CD4-positive, alpha-beta memory T cell (primary cell): ENCODE measurements at regions of chr11 and their contacts with region 1.

Region 1: DNA sequence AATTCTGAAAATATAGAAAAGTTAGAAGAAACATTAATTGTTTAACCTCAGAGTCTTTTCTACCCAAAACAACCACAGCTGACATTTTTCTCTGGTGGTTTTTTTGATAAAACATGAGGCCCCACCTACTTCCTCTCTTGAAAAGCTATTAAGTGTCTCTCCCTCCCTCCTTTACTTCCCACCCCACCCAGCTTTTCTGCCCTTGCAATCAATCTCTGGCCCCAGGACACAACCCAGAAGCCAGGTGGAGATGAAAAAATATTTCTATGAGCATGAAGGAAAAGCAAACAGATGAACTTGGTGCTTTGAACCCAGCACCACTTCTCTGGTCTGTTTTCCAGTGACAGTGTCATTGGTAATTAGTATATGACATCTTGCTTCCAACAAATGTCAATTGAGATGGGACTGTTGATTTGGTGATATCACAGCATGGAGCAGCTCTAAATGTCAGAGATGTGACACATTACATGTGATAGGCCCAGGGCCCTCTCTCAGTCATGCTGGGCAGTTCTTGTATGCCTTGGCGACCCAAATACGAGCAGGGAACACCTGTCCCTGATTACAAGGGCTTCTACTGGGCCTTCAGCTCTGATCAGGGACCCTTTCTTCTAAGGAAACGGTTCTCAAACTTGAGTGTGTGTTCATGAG is 23.9 kb upstream of the TMPRSS13 start:
- DNase-seq: peak; percentile 65 to 74 (median 68)
- H3K4me3 ChIP-seq: peak overlapping the region in 1 of 2 donors; percentile 50
- H3K4me3 Mint-ChIP-seq: peak overlapping the region; percentile 29 to 89 (median 81)
- H3K27ac ChIP-seq: peak overlapping the region; percentile 48
- H3K27ac Mint-ChIP-seq: peak overlapping the region; percentile 88 to 97 (median 94)
- H3K4me1 ChIP-seq: peaks cover 81% of the 10 kb centered on the region
- H3K4me1 Mint-ChIP-seq: peaks cover 61 to 93% (median 75%) of the 10 kb centered on the region in 4 donors
- H3K27me3 ChIP-seq: no peaks in the 10 kb centered on the region
- H3K27me3 Mint-ChIP-seq: no peaks in the 10 kb centered on the region

Region 2: GRCh38 chr11:117189191-117189930 is 763.8 kb before region 1 on chr11:
- CTCF ChIA-PET with region 1: no interaction called
- POLR2A ChIA-PET with region 1: no interaction called
- intact Hi-C with region 1: no loop called
- DNase-seq: no peak
- H3K4me3 ChIP-seq: no peak overlapping the region
- H3K4me3 Mint-ChIP-seq: no peak overlapping the region
- H3K27ac ChIP-seq: no peak overlapping the region
- H3K27ac Mint-ChIP-seq: no peak overlapping the region
- H3K4me1 ChIP-seq: no peaks in the 10 kb centered on the region
- H3K4me1 Mint-ChIP-seq: peaks cover 0 to 15% (median 5%) of the 10 kb centered on the region in 4 donors
- H3K27me3 ChIP-seq: no peaks in the 10 kb centered on the region
- H3K27me3 Mint-ChIP-seq: no peaks in the 10 kb centered on the region

Region 3: DNA sequence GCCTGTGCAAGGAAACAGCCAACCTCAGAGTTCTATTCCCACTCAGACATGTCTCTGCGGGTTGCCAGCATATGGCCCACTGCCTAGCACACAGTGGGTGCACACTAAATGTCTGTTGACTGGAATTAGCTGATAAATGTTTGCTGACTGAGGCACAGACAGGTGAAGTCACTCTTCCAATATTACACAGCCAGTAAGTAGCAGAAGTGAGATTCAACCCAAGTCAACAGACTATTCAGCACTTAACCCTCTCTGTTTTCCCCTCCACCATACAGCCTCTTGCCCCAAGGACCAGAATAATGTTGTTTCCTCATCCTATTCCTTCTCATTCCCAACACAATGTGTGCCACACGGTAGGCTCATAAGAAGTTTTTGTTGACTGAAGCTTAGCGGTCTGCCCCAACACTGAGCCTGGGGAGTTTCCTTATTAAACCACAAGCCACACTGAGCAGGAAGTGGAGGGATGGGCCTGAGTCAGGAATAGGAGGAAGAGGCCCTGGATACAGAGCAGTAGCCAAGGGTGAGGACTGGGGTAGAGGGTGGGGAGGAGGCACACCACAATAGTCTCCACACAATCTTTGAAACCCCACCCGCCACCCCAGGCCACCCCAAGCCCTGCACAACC is 17.4 kb after region 1 on chr11:
- CTCF ChIA-PET with region 1: interaction called, 402 read pairs
- POLR2A ChIA-PET with region 1: interaction called, 1,750 read pairs
- intact Hi-C with region 1: loop called (anchors 1 kb)
- DNase-seq: peak; percentile 33 to 75 (median 43)
- H3K4me3 ChIP-seq: peak overlapping the region; percentile 17 to 21
- H3K4me3 Mint-ChIP-seq: peak overlapping the region in 7 of 8 donors; percentile 59 to 89 (median 76)
- H3K27ac ChIP-seq: peak overlapping the region; percentile 27
- H3K27ac Mint-ChIP-seq: peak overlapping the region; percentile 76 to 91 (median 87)
- H3K4me1 ChIP-seq: peaks cover 66% of the 10 kb centered on the region
- H3K4me1 Mint-ChIP-seq: peaks cover 49 to 69% (median 62%) of the 10 kb centered on the region in 4 donors
- H3K27me3 ChIP-seq: no peaks in the 10 kb centered on the region
- H3K27me3 Mint-ChIP-seq: no peaks in the 10 kb centered on the region

Region 4: DNA sequence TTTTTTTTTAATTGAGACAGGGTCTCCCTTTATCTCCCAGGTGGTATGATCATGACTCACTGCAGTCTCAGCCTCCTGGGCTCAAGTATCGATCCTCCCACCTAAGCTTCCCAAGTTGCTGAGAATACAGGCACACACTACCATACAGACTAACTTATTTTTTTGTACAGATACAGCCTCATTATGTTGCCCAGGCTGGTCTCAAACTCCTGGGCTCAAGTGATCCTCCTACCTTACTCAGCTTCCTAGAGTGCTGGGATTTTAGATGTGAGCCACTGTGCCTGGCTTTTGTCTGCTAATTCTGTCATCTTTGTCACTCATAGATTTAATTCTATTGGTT is 1296.5 kb after region 1 on chr11:
- CTCF ChIA-PET with region 1: no interaction called
- POLR2A ChIA-PET with region 1: no interaction called
- intact Hi-C with region 1: no loop called
- DNase-seq: no peak
- H3K4me3 ChIP-seq: no peak overlapping the region
- H3K4me3 Mint-ChIP-seq: peak overlapping the region in 1 of 8 donors; percentile 26
- H3K27ac ChIP-seq: no peak overlapping the region
- H3K27ac Mint-ChIP-seq: peak overlapping the region in 5 of 7 donors; percentile 22 to 57 (median 47)
- H3K4me1 ChIP-seq: peaks cover 19% of the 10 kb centered on the region
- H3K4me1 Mint-ChIP-seq: peaks cover 21 to 32% (median 23%) of the 10 kb centered on the region in 4 donors
- H3K27me3 ChIP-seq: no peaks in the 10 kb centered on the region
- H3K27me3 Mint-ChIP-seq: no peaks in the 10 kb centered on the region